ENCODE measurements at regions of chr2 and their contacts with region 1.

Region 1: GRCh38 chr2:118013724-118014491 is at the start of gene CCDC93:
- DNase-seq: peak; percentile 82 to 95 (median 91)
- ATAC-seq: peak; percentile 88
- H3K4me3 ChIP-seq: peak within 1 kb of the TSS; percentile 90
- H3K4me3 Mint-ChIP-seq: peak within 1 kb of the TSS; percentile 87 to 98 (median 95)
- H3K27ac ChIP-seq: peak within 1 kb of the TSS; percentile 98
- H3K27ac Mint-ChIP-seq: peak within 1 kb of the TSS; percentile 59 to 96 (median 90)
- H3K4me1 ChIP-seq: peaks cover 6 to 9% of the 10 kb centered on the region in 2 donors
- H3K4me1 Mint-ChIP-seq: peaks cover 30 to 69% (median 41%) of the 10 kb centered on the region in 7 donors
- H3K27me3 ChIP-seq: no peaks in the 10 kb centered on the region
- H3K27me3 Mint-ChIP-seq: peaks cover 0 to 6% (median 1%) of the 10 kb centered on the region in 5 donors
- total RNA-seq, gene CCDC93: 34.8 to 73.9 (median 51.5) TPM

Region 2: DNA sequence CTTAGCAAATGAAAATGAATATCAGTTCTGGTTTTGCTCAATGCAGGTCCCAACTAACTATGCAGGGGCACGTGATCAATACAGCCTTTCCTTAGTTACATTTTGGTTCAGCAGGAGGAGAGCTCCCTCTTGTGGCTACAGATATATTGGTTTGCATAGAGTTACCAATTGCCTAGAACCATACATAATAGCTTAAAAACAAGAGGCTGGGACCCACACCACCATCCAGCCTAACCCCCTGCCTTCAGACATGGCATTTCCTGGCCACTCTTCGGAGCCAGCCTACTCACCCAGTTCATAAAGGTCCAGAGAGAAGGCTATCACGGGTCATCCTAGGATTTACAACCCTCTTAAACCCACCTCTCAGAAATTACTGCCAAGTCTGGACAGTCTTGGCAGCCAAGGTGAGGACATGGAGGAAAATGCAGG is 10.5 kb before region 1 on chr2:
- CTCF ChIA-PET with region 1: interaction called, 16 read pairs
- POLR2A ChIA-PET with region 1: interaction called, 9 read pairs
- intact Hi-C with region 1: loop called (anchors 1 kb)
- DNase-seq: peak in 8 of 9 donors; percentile 26 to 77 (median 68)
- ATAC-seq: peak; percentile 99
- H3K4me3 ChIP-seq: no peak overlapping the region
- H3K4me3 Mint-ChIP-seq: no peak overlapping the region
- H3K27ac ChIP-seq: no peak overlapping the region
- H3K27ac Mint-ChIP-seq: peak overlapping the region in 7 of 9 donors; percentile 9 to 84 (median 59)
- H3K4me1 ChIP-seq: peaks cover 0 to 8% of the 10 kb centered on the region in 2 donors
- H3K4me1 Mint-ChIP-seq: peaks cover 11 to 35% (median 27%) of the 10 kb centered on the region in 7 donors
- H3K27me3 ChIP-seq: no peaks in the 10 kb centered on the region
- H3K27me3 Mint-ChIP-seq: no peaks in the 10 kb centered on the region

Region 3: DNA sequence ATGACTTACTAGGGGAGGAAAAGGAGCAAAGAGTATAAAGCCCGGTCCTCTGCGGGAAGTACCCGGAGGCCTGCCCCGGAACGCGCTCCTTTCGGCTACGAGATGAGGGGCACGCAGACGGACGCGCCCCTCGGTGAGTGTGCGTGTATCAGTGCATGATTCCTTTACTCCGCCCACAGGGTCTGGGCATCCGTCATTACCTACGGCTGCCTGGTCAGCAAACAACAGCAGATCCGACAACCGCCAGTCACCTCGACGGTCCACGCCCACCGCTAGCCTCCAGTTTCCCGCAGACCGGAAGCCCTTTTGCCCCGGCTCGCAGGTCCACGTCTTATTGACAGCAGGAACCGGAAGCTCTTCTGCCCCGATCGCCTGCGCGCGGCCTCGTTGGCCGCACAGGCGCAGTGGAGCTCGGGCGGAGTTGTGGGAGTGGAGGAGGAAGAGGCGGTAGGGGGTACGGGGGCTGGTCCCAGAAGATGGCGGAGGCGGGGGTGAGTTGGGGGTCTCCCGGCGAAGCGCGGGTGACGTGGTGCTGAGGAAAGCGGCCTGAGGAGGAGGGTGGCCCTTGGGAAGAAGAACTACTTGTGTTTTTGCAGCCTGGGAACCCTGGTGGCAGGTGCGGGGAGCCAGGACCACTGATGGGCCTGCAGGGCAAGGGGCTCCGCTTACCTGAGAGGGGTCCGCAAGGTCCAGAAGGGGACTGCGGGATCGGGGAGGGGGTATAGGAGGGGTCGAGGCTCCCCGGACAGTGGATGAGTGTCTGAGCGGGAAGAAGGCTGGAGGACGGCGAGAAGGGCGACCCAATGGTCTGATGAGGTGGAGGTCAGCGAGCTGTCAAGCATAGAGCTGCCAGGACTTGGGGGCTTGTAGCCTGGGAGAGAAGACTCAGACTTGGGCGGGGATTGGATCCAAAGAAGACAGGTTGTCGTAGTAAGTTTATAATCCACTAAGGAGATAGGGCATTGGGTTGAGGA is 74.4 kb after region 1 on chr2 and contains the start of gene INSIG2:
- CTCF ChIA-PET with region 1: no interaction called
- POLR2A ChIA-PET with region 1: interaction called, 11 read pairs
- intact Hi-C with region 1: loop called (anchors 1 kb)
- DNase-seq: peak; percentile 77 to 92 (median 81)
- ATAC-seq: peak; percentile 93
- H3K4me3 ChIP-seq: peak within 1 kb of the TSS; percentile 92
- H3K4me3 Mint-ChIP-seq: peak within 1 kb of the TSS; percentile 63 to 96 (median 92)
- H3K27ac ChIP-seq: peak within 1 kb of the TSS; percentile 87
- H3K27ac Mint-ChIP-seq: peak within 1 kb of the TSS; percentile 70 to 97 (median 91)
- H3K4me1 ChIP-seq: peaks cover 0 to 7% of the 10 kb centered on the region in 2 donors
- H3K4me1 Mint-ChIP-seq: peaks cover 6 to 37% (median 24%) of the 10 kb centered on the region in 7 donors
- H3K27me3 ChIP-seq: no peaks in the 10 kb centered on the region
- H3K27me3 Mint-ChIP-seq: peaks cover 0 to 12% (median 0%) of the 10 kb centered on the region in 5 donors
- total RNA-seq, gene INSIG2: 8.5 to 31.5 (median 20.3) TPM

Region 4: DNA sequence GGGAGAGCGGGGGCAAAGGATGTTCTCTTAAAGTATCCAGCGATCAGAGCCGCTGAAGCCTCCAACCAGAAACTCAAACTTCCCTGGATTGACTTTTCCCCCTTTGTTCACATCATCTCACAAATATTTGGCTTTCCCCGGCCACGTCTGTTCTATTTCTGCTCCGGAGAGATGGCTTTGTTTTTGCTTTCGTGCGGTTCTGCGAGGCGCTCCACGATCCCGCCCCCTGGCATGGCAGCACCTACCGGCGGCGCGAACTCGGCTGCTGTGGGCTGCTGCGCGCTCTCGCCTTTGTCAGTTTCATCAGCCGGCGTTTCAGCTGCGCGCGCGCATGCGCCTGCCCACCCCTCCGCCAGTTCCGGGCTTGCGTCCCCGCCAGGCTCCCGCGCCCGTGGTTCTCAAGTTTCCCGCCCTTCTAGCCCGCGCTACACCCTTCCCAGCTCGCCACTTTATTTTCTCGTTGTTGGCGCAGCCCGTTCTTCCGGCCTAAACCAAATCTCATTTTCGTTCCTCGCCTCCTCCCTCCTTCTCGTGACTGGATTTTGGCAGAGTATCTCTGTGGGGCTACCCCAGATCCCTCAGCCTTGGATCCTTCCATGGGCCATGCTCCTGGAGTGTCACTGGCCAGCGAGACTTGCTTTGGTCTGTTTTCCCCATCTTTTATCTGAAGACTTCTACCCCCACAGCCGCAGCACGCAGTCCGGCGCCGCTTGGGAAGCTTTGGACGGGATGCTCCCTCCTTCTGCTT is 172.4 kb after region 1 on chr2:
- CTCF ChIA-PET with region 1: no interaction called
- POLR2A ChIA-PET with region 1: no interaction called
- intact Hi-C with region 1: loop called (anchors 1 to 5 kb)
- DNase-seq: peak; percentile 77 to 91 (median 86)
- ATAC-seq: peak; percentile 97
- H3K4me3 ChIP-seq: peak overlapping the region; percentile 81
- H3K4me3 Mint-ChIP-seq: peak overlapping the region; percentile 89 to 98 (median 94)
- H3K27ac ChIP-seq: peak overlapping the region; percentile 74
- H3K27ac Mint-ChIP-seq: peak overlapping the region; percentile 88 to 98 (median 90)
- H3K4me1 ChIP-seq: peaks cover 6 to 9% of the 10 kb centered on the region in 2 donors
- H3K4me1 Mint-ChIP-seq: peaks cover 7 to 25% (median 21%) of the 10 kb centered on the region in 7 donors
- H3K27me3 ChIP-seq: no peaks in the 10 kb centered on the region
- H3K27me3 Mint-ChIP-seq: peaks cover 0 to 2% (median 0%) of the 10 kb centered on the region in 5 donors

Region 5: DNA sequence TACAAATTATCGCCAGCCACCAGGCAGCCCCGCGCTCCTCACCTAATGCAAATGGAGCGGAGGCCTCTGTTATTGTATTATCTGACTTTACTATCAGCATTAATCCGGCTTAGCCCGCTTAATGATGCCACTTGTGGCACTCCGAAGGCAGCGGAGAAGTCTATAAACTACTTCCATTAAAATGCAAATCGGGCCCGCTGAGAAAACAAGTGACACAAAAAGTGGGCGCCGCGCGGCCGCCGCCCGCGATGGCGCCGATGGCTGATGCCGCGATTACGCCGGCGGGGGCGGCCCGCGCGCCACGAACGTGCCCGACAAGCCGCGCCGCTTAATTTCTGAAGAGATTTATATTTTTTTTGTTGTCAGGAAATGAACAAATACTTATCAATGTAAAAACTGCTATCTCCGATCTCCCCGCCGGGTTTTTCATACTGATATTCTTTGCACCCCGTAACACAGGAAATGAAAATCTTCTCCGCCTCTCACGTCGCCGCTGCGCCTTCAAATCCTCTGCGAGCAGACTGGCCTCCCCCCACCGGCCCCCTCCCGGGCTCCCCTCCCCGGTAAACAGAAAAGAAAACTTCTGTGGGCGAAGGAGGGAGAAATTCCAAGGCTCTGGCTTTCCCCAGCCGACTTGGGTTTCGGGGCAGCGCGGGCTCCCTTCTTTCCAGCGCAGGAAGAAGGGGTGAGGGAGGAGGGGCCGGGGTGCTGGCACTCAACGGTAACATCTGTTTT is 296.2 kb after region 1 on chr2:
- CTCF ChIA-PET with region 1: no interaction called
- POLR2A ChIA-PET with region 1: no interaction called
- intact Hi-C with region 1: loop called (anchors 1 to 2 kb)
- DNase-seq: peak; percentile 51 to 82 (median 75)
- ATAC-seq: peak; percentile 81
- H3K4me3 ChIP-seq: peak overlapping the region; percentile 89
- H3K4me3 Mint-ChIP-seq: peak overlapping the region; percentile 81 to 95 (median 90)
- H3K27ac ChIP-seq: peak overlapping the region; percentile 89
- H3K27ac Mint-ChIP-seq: peak overlapping the region; percentile 87 to 99 (median 96)
- H3K4me1 ChIP-seq: peaks cover 10 to 12% of the 10 kb centered on the region in 2 donors
- H3K4me1 Mint-ChIP-seq: peaks cover 0 to 21% (median 9%) of the 10 kb centered on the region in 7 donors
- H3K27me3 ChIP-seq: no peaks in the 10 kb centered on the region
- H3K27me3 Mint-ChIP-seq: peaks cover 0 to 21% (median 0%) of the 10 kb centered on the region in 5 donors

Region 6: GRCh38 chr2:120012771-120013596 is 1999.1 kb after region 1 on chr2 and contains the start of gene EPB41L5:
- CTCF ChIA-PET with region 1: no interaction called
- POLR2A ChIA-PET with region 1: no interaction called
- intact Hi-C with region 1: loop called in 1 of 2 experiments (anchors 5 kb)
- DNase-seq: peak; percentile 56 to 81 (median 67)
- ATAC-seq: peak; percentile 93
- H3K4me3 ChIP-seq: peak within 1 kb of the TSS; percentile 69
- H3K4me3 Mint-ChIP-seq: peak within 1 kb of the TSS; percentile 73 to 89 (median 86)
- H3K27ac ChIP-seq: peak within 1 kb of the TSS; percentile 70
- H3K27ac Mint-ChIP-seq: peak within 1 kb of the TSS in 8 of 9 donors; percentile 36 to 75 (median 70)
- H3K4me1 ChIP-seq: peaks cover 6% of the 10 kb centered on the region in 2 donors
- H3K4me1 Mint-ChIP-seq: peaks cover 8 to 37% (median 24%) of the 10 kb centered on the region in 7 donors
- H3K27me3 ChIP-seq: no peaks in the 10 kb centered on the region
- H3K27me3 Mint-ChIP-seq: peaks cover 0 to 20% (median 0%) of the 10 kb centered on the region in 5 donors
- total RNA-seq, gene EPB41L5: 2.2 to 9.3 (median 6.8) TPM

Measured in naive thymus-derived CD4-positive, alpha-beta T cell (primary cell).